Heart left ventricle (tissue), 16 donors: ENCODE measurements at regions of chr17 and their contacts with region 1.

Region 1: GRCh38 chr17:57785022-57785421 is 39.9 kb upstream of the CCDC182 start:
- DNase-seq: peak; percentile 60 to 80 (median 72)
- ATAC-seq: peak in 3 of 4 donors; percentile 64 to 72 (median 71)
- H3K4me3 ChIP-seq: no peak overlapping the region
- H3K27ac ChIP-seq: peak overlapping the region in 8 of 12 donors; percentile 6 to 68 (median 46)
- H3K4me1 ChIP-seq: peaks cover 0 to 42% (median 23%) of the 10 kb centered on the region in 12 donors
- H3K27me3 ChIP-seq: peaks cover 0 to 6% (median 0%) of the 10 kb centered on the region in 9 donors
- CTCF ChIP-seq: no peak
- POLR2A ChIP-seq: no peak

Region 2: GRCh38 chr17:57810721-57811637 is 26.0 kb after region 1 on chr17:
- intact Hi-C with region 1: loop called in 1 of 10 experiments (anchors 2 kb)
- DNase-seq: peak; percentile 43 to 81 (median 76)
- ATAC-seq: peak; percentile 51 to 77 (median 68)
- H3K4me3 ChIP-seq: peak overlapping the region in 10 of 12 donors; percentile 5 to 45 (median 28)
- H3K27ac ChIP-seq: peak overlapping the region; percentile 9 to 87 (median 68)
- H3K4me1 ChIP-seq: peaks cover 0 to 32% (median 19%) of the 10 kb centered on the region in 12 donors
- H3K27me3 ChIP-seq: peaks cover 0 to 16% (median 0%) of the 10 kb centered on the region in 9 donors
- CTCF ChIP-seq: peak in 1 of 12 donors; percentile 8
- POLR2A ChIP-seq: no peak